MCF 10A (cell line): ENCODE measurements at regions of chr12 and their contacts with region 1.

Region 1: GRCh38 chr12:442235-442884 is 17.4 kb upstream of the B4GALNT3 start:
- DNase-seq: peak; percentile 66
- H3K4me3 Mint-ChIP-seq: no peak overlapping the region
- H3K27ac Mint-ChIP-seq: no peak overlapping the region
- H3K4me1 Mint-ChIP-seq: no peaks in the 10 kb centered on the region
- H3K27me3 Mint-ChIP-seq: no peaks in the 10 kb centered on the region
- CTCF ChIP-seq: peak; percentile 75

Region 2: GRCh38 chr12:422526-422925 is 19.8 kb before region 1 on chr12:
- CTCF ChIA-PET with region 1: interaction called, 28 read pairs
- POLR2A ChIA-PET with region 1: no interaction called
- intact Hi-C with region 1: no loop called
- DNase-seq: no peak
- H3K4me3 Mint-ChIP-seq: no peak overlapping the region
- H3K27ac Mint-ChIP-seq: no peak overlapping the region
- H3K4me1 Mint-ChIP-seq: no peaks in the 10 kb centered on the region
- H3K27me3 Mint-ChIP-seq: no peaks in the 10 kb centered on the region
- CTCF ChIP-seq: no peak

Region 3: GRCh38 chr12:459430-460258 is 17.3 kb after region 1 on chr12 and contains the start of gene B4GALNT3:
- CTCF ChIA-PET with region 1: interaction called, 13 read pairs
- POLR2A ChIA-PET with region 1: no interaction called
- intact Hi-C with region 1: no loop called
- DNase-seq: peak; percentile 39
- H3K4me3 Mint-ChIP-seq: peak within 1 kb of the TSS; percentile 71
- H3K27ac Mint-ChIP-seq: no peak within 1 kb of the TSS
- H3K4me1 Mint-ChIP-seq: peaks cover 23% of the 10 kb centered on the region
- H3K27me3 Mint-ChIP-seq: peaks cover 44% of the 10 kb centered on the region
- CTCF ChIP-seq: no peak
- total RNA-seq, gene B4GALNT3: 0.68 and 0.76 TPM in 2 replicates

Region 4: DNA sequence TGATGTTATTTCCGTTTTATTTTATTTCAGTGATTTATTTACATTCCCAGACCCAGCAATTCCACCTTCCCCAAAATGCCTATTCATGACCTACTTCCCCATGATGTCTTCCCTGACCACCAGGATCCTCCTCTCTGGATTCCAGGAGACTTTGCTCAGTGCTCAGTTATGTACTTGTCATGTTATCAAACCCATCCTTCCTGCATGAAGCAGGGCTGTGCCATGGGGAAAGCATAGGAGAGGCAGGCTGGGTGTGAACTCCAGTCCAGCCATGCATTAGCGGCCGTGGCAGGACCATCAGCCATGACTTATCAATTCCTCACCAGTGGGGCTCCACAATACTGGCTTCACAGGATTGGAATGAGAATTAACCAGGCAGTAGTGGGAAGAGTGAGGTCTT is 75.2 kb after region 1 on chr12:
- CTCF ChIA-PET with region 1: interaction called, 14 read pairs
- POLR2A ChIA-PET with region 1: no interaction called
- intact Hi-C with region 1: no loop called
- DNase-seq: no peak
- H3K4me3 Mint-ChIP-seq: no peak overlapping the region
- H3K27ac Mint-ChIP-seq: no peak overlapping the region
- H3K4me1 Mint-ChIP-seq: no peaks in the 10 kb centered on the region
- H3K27me3 Mint-ChIP-seq: peaks cover 13% of the 10 kb centered on the region
- CTCF ChIP-seq: no peak

Region 5: DNA sequence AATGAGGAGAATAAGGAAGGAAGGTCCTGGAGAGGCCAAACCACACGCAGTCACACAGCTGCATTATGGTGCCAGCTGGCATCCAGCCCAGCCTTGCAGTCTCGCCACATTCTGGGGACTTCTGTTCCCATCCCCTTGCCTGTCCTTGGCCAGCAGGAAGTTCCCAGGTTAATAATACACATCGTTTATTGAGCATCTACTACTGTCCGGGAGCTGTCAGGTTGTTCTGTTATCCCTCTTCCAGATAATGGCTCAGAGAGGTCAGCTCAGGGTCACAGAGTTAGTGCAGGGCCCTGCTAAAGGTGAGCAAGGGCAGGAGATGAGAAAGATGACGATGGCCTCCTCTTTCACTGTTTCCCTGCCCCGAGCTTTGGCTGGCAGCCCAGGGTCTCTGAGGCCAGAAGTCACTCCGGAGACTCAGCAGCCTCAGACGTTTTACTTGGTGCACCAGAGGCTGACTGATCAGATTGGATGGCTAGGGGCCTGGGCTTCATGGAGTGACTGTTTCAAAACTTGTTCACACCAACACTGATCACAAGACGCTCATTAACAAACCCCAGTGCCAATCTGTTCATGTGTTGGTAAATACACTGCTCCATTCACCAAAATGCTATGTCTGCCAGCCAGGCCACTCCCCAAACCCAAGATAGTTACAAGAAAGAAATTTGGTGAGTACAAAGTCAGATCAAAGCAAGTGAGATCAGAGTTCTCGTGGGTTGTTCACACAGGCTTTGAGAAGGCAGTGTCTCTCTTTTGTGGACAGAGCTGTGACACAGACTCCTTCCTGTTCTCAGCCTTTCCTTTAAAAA is 96.6 kb after region 1 on chr12:
- CTCF ChIA-PET with region 1: interaction called, 63 read pairs
- POLR2A ChIA-PET with region 1: interaction called, 6 read pairs
- intact Hi-C with region 1: no loop called
- DNase-seq: peak; percentile 69
- H3K4me3 Mint-ChIP-seq: no peak overlapping the region
- H3K27ac Mint-ChIP-seq: no peak overlapping the region
- H3K4me1 Mint-ChIP-seq: peaks cover 8% of the 10 kb centered on the region
- H3K27me3 Mint-ChIP-seq: peaks cover 2% of the 10 kb centered on the region
- CTCF ChIP-seq: no peak

Region 6: DNA sequence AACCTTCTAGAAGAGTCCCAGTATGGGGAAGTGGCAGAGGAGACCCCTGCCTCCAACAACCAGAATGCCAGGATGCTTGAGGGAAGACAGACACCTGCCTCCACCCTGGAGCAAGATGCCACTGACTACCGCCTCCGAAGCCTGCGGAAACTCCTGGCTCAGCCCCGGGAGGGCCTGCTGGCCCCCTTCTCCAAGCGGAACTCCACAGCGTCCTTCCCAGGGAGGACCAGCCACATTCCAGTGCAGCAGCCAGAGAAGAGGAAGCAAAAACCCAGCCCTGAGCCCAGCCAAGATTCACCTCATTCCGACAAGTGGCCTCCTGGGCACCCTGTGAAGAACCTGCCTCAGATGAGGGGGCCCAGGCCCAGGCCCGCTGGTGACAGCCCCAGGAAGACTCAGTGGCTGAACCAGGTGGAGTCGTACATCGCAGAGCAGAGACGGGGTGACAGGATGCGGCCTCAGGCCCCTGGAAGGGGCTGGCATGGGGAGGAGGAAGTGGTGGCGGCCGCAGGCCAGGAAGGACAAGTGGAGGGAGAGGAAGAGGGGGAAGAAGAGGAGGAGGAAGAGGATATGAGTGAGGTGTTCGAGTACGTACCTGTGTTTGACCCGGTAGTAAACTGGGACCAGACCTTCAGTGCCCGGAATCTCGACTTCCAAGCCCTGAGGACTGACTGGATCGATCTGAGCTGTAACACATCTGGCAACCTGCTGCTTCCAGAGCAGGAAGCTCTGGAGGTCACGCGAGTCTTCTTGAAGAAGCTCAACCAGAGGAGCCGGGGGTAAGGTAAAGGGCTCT is 111.0 kb after region 1 on chr12:
- CTCF ChIA-PET with region 1: interaction called, 131 read pairs
- POLR2A ChIA-PET with region 1: no interaction called
- intact Hi-C with region 1: no loop called
- DNase-seq: no peak
- H3K4me3 Mint-ChIP-seq: no peak overlapping the region
- H3K27ac Mint-ChIP-seq: no peak overlapping the region
- H3K4me1 Mint-ChIP-seq: no peaks in the 10 kb centered on the region
- H3K27me3 Mint-ChIP-seq: peaks cover under 1% of the 10 kb centered on the region
- CTCF ChIP-seq: no peak